ENCODE measurements at regions of chr1 and their contacts with region 1.

Region 1: GRCh38 chr1:248822148-248823032 is 3.3 kb downstream of the SH3BP5L start:
- DNase-seq: no peak
- H3K4me3 ChIP-seq: no peak overlapping the region
- H3K27ac ChIP-seq: no peak overlapping the region
- H3K4me1 ChIP-seq: peaks cover 24% of the 10 kb centered on the region
- H3K27me3 ChIP-seq: no peaks in the 10 kb centered on the region
- CTCF ChIP-seq: no peak
- EP300 ChIP-seq: no peak
- POLR2A ChIP-seq: no peak

Region 2: DNA sequence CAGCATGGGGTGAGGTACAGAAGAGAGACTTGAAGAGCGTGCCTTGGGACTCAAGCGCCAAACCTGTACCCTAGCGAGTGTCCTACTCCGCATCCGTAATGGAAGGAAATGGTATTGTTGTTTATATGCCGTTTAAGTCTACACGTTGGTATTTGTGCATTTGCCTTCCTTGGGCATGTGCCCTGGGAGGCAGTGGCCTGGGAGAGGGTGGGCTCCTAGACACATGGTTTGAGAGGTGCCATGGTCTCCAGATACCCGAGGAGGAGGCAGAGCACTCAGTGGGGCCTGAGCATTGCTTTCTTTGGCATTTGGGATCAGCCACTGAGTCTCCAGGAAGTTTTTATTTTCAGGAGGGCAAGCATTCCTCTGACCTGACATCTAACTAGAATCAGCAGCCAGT is 22.1 kb after region 1 on chr1:
- intact Hi-C with region 1: loop called in 1 of 4 experiments (anchors 2 kb)
- DNase-seq: no peak
- H3K4me3 ChIP-seq: no peak overlapping the region
- H3K27ac ChIP-seq: no peak overlapping the region
- H3K4me1 ChIP-seq: no peaks in the 10 kb centered on the region
- H3K27me3 ChIP-seq: no peaks in the 10 kb centered on the region
- CTCF ChIP-seq: no peak
- EP300 ChIP-seq: no peak
- POLR2A ChIP-seq: no peak